Posterior vena cava (tissue), 2 donors: ENCODE measurements at regions of chr6 and their contacts with region 1.

Region 1: GRCh38 chr6:5606546-5606945 is 345.2 kb downstream of the FARS2 start:
- DNase-seq: no peak

Region 2: DNA sequence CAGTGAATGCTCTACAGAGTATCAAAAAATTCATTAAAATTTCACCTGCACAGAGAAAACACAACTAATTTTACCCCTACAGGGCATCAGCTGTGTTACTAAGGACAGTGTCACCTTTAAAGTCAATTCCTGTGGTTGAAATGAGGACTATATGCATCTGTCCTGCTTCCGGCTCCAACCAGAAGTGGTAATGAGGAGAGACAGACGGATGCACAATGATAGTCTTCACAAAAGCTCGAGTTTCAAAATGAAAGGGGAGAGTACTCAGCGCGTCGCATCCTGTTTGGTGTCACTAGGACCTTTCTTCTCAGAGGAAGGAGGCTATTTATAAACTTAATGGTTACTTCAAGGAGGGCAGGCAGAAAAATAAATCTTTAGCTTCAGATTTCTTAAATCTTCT is 432.3 kb before region 1 on chr6:
- intact Hi-C with region 1: no loop called
- DNase-seq: no peak

Region 3: DNA sequence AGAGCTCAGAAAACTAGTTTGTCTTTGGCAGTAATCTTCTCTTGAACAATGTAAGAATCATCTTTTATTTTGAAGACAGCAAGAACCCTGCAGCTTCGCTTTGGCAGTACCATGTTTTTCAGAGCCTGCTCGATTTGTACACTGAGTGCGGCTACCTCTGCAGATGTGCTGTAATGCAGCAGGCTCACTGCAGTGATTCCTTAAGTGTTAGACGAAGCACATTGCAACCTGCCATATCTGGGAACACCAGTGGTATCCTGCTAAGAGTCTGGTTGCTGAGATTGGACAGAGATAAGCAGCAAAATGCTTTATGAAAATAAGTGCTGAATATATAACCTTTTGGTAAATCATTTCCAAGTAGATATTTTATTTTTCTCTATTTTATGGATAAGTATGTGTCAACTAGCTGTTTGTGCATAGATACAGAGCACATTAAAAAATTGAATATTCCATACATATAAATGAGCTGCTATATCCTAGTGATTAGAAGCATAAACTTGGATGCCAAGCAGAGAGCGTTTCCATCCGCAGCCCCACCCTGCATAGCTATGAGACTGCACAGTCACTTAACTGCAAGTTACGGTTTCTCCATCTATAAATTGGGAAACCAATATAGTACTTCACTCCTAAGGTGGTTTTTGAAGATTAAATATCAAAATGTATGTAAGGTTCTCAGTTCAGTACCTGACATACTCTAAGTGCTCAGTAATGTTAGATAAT is 17.0 kb before region 1 on chr6:
- intact Hi-C with region 1: loop called in 1 of 2 experiments (anchors 1 kb)
- DNase-seq: no peak